ENCODE measurements at regions of chr19 and their contacts with region 1.

Region 1: DNA sequence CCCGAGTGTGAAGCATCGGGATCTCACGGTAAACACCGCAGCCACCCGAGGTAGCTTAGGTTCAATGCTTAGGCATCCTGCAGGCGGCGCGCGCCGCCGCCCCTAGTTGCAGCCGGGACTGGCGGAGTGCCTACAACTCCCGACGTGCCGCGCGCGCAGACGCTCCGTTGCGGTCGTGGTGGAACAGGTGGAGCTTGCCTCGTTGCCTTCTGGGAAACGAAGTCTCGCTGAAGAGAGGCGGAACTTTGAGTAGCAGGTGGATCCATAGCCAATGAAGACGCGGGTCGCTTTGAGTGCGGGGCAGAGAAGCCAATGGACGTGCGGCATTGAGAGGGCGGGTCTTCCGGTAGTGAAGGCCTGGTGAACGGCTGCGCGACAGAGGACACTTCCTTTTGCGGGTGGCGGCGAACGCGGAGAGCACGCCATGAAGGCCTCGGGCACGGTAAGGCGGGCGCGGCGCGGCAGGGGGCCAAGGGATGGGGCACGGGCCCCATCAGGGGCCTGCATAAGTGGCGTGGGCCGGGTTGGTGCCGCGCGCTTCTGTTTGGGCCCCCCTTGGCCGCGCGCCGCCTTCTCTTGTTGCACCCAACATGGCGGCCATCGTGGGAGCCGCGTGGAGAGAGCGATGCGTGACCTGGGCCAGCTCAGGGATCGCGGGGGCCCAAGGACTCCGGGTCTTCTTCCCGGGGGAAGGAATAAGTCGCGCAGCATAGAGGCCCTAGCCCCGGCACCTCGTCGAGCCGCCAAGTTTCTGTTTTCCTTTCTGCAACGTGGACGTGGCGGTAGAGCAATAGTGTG is at the start of gene RPL18A:
- DNase-seq: peak; percentile 96 to 100 (median 99)
- ATAC-seq: peak; percentile 95
- H3K4me3 ChIP-seq: peak within 1 kb of the TSS; percentile 86
- H3K4me3 Mint-ChIP-seq: peak within 1 kb of the TSS; percentile 100
- H3K27ac ChIP-seq: peak within 1 kb of the TSS; percentile 1 to 71
- H3K27ac Mint-ChIP-seq: peak within 1 kb of the TSS; percentile 88
- H3K4me1 ChIP-seq: peaks cover 37% of the 10 kb centered on the region
- H3K4me1 Mint-ChIP-seq: peaks cover 33% of the 10 kb centered on the region
- H3K27me3 ChIP-seq: no peaks in the 10 kb centered on the region
- H3K27me3 Mint-ChIP-seq: no peaks in the 10 kb centered on the region
- CTCF ChIP-seq: peak; percentile 82
- total RNA-seq, gene RPL18A: 4,157 to 4,260 TPM

Region 2: DNA sequence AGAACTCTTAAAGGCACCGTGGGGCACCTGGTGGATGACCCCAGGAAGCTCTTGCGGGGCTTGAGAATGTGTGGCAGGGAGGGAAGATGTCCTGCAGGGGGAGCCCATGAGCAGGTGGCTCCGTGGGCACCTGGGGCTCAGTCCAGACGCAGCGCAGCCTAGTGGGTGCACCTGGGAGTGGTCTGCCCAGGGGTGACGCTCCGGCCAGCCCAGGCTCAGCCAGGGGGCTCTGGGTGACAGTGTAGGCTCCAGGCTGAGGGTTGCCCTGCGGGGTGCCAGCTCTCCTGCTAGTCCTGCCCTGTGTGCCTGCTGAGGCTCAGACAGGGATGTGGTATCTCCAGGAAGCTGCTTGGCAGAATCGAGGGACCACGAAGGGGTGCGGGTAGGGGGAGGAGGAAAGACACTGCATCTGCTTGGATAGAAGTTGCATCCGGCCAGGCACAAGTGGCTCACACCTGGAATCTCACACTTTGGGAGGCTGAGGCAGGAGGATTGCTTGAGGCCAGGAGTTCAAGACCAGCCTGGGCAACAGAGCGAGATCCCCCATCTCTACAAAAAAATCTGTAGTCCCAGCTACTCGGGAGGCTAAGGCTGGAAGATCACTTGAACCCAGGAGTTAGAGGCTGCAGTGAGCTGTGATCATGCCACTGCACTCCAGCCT is 363.3 kb before region 1 on chr19:
- CTCF ChIA-PET with region 1: no interaction called
- POLR2A ChIA-PET with region 1: interaction called, 5 read pairs
- intact Hi-C with region 1: loop called in 1 of 2 experiments (anchors 2 kb)
- DNase-seq: peak; percentile 68 to 91 (median 76)
- ATAC-seq: peak; percentile 99
- H3K4me3 ChIP-seq: no peak overlapping the region
- H3K4me3 Mint-ChIP-seq: no peak overlapping the region
- H3K27ac ChIP-seq: no peak overlapping the region
- H3K27ac Mint-ChIP-seq: no peak overlapping the region
- H3K4me1 ChIP-seq: peaks cover 25% of the 10 kb centered on the region
- H3K4me1 Mint-ChIP-seq: peaks cover 17% of the 10 kb centered on the region
- H3K27me3 ChIP-seq: no peaks in the 10 kb centered on the region
- H3K27me3 Mint-ChIP-seq: no peaks in the 10 kb centered on the region
- CTCF ChIP-seq: peak; percentile 96

Region 3: DNA sequence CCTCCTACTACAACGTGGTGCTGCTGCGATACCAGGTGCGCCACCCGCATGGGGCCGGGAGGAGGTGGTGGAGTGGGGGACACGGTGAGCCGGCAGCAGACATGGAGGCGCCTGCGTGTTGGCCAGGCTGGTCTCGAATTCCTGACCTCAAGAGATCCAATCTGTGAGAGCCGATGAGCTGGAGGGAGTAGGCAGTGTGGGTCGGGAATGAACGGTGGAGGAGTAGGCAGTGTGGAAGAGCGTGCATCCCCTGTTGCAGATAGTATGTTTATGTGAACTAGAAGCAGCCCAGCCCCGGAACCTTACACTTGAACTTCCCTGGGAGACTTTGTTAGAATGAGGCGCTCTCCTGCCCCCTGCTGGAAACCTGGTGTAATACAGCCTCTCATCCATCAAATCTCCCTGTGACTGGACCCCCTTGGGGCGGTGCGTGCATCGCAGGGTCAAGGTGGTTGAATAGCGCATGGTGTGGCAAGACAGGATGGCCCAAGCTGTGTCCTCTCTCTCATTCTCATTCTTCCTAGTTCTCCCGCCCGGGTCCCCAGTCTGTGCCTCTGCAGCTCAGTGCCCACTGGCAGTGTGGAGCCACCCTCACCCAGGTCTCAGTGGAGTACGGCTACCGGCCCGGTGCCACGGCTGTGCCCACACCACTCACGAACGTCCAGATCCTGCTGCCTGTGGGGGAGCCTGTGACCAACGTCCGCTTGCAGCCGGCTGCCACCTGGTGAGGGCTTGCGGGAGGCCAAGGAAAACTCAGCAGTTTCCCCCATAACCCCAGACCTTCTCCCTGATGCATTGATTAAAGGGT is 75.3 kb before region 1 on chr19:
- CTCF ChIA-PET with region 1: interaction called, 12 read pairs
- POLR2A ChIA-PET with region 1: no interaction called
- intact Hi-C with region 1: loop called (anchors 1 kb)
- DNase-seq: peak; percentile 62 to 86 (median 72)
- ATAC-seq: peak; percentile 95
- H3K4me3 ChIP-seq: no peak overlapping the region
- H3K4me3 Mint-ChIP-seq: no peak overlapping the region
- H3K27ac ChIP-seq: no peak overlapping the region
- H3K27ac Mint-ChIP-seq: peak overlapping the region; percentile 18
- H3K4me1 ChIP-seq: peaks cover 10% of the 10 kb centered on the region
- H3K4me1 Mint-ChIP-seq: peaks cover 15% of the 10 kb centered on the region
- H3K27me3 ChIP-seq: no peaks in the 10 kb centered on the region
- H3K27me3 Mint-ChIP-seq: no peaks in the 10 kb centered on the region
- CTCF ChIP-seq: peak; percentile 71

Region 4: DNA sequence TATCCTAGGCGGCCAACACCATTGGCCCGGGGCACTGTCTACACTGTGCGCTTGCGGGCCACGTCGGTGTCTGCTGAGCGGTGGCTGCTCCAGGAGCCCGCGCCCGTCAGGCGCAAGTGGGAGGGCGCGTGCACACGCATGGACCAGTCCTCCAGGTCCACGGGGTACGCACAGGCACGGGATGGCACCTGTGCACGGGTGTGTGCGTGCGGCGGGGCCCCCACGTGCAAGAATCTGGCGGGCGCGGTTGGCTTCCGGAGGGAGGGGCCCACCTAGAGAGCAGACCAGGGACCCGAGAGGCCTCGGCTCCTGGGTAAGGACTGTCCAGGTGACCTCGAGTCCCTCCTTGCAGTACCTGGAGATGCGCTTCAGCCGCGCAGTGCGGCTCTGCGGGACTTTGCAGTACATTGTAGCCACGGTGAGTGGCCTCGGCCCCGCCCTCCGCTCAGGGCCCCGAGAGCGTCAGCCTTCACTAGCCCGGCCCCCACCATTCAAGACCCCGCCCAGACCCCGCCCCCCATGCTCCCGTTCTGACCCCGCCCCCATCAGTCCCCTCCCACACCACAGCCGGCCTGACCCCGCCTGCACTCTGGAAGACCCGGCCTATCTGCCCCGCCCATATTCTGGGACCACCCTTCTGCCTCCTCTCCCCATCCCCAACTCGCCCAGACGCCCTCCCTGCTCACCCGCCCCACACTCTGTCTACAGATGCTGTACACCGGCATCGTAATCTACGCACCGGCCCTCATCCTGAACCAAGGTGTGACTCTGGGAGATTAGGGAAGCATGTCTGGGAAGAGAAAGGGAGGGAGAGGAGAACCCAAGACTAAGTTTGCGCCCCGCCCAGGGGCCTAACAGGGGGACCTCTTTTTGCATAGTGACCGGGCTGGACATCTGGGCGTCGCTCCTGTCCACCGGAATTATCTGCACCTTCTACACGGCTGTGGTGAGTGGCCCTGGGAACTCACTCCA is 14.3 kb after region 1 on chr19:
- CTCF ChIA-PET with region 1: interaction called, 28 read pairs
- POLR2A ChIA-PET with region 1: interaction called, 57 read pairs
- intact Hi-C with region 1: loop called in 1 of 2 experiments (anchors 1 kb)
- DNase-seq: peak; percentile 49 to 88 (median 62)
- ATAC-seq: peak; percentile 80
- H3K4me3 ChIP-seq: peak overlapping the region; percentile 62
- H3K4me3 Mint-ChIP-seq: peak overlapping the region; percentile 85
- H3K27ac ChIP-seq: no peak overlapping the region
- H3K27ac Mint-ChIP-seq: peak overlapping the region; percentile 70
- H3K4me1 ChIP-seq: peaks cover 35% of the 10 kb centered on the region
- H3K4me1 Mint-ChIP-seq: peaks cover 19% of the 10 kb centered on the region
- H3K27me3 ChIP-seq: no peaks in the 10 kb centered on the region
- H3K27me3 Mint-ChIP-seq: no peaks in the 10 kb centered on the region
- CTCF ChIP-seq: no peak

Region 5: DNA sequence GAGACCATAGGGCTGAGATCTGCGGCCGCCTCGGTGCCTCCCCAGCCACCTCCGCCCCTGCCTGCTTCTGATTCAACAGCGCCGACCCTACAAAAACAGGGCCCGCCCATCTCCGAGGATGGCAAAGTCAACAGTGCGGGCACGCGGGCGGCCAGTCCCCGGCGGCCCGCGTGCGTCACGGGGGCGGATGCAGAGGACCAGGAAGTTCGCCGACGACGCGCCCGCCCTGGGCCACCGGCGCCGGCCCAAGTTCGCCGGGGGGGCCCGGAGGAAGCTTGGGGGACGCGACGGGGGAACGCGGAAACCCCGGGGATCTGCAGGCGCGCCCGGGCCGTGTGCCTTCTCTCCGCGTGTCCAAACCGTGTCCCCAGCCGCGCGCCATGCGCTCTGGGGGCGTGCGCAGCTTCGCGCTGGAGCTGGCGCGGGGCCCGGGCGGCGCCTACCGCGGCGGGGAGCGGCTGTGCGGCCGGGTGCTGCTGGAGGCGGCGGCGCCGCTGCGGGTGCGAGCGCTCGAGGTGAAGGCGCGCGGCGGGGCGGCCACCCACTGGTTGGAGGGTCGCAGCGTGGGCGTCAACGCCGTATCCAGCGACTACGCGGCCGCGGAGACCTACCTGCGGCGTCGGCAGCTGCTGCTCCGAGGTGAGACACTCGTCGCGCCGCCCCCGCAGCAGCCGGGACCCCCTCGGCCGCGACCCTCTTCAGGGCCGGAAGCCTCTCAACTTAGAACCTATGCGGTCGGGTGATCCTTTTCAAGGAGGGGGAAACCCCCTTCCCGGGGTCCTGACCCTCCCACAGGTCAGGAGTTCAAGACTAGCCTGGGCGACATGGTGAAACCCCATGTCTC is 141.4 kb after region 1 on chr19:
- CTCF ChIA-PET with region 1: interaction called, 20 read pairs
- POLR2A ChIA-PET with region 1: interaction called, 15 read pairs
- intact Hi-C with region 1: loop called (anchors 1 to 2 kb)
- DNase-seq: peak; percentile 80 to 99 (median 94)
- ATAC-seq: peak; percentile 80
- H3K4me3 ChIP-seq: peak overlapping the region; percentile 92
- H3K4me3 Mint-ChIP-seq: peak overlapping the region; percentile 93
- H3K27ac ChIP-seq: peak overlapping the region; percentile 91 to 95
- H3K27ac Mint-ChIP-seq: peak overlapping the region; percentile 98
- H3K4me1 ChIP-seq: peaks cover 49% of the 10 kb centered on the region
- H3K4me1 Mint-ChIP-seq: peaks cover 28% of the 10 kb centered on the region
- H3K27me3 ChIP-seq: no peaks in the 10 kb centered on the region
- H3K27me3 Mint-ChIP-seq: peaks cover 4% of the 10 kb centered on the region
- CTCF ChIP-seq: no peak

Measured in CD4-positive, alpha-beta T cell (primary cell).